Posterior vena cava (tissue), 2 donors: ENCODE measurements at regions of chr14 and their contacts with region 1.

Region 1: GRCh38 chr14:93410021-93410420 is 20.7 kb upstream of the UNC79 start:
- DNase-seq: no peak

Region 2: GRCh38 chr14:93527068-93527668 is 117.1 kb after region 1 on chr14:
- intact Hi-C with region 1: no loop called
- DNase-seq: no peak

Region 3: GRCh38 chr14:93818857-93819256 is 408.8 kb after region 1 on chr14:
- intact Hi-C with region 1: loop called in 1 of 2 experiments (anchors 5 kb)
- DNase-seq: no peak